T-cell (primary cell): ENCODE measurements at regions of chr5 and their contacts with region 1.

Region 1: GRCh38 chr5:66306105-66306843 is 162.2 kb downstream of the SREK1 start:
- DNase-seq: peak in 15 of 35 experiments; percentile 3 to 55 (median 7)
- ATAC-seq: peak; percentile 53 to 67 (median 58)
- H3K4me3 ChIP-seq: no peak overlapping the region
- H3K4me3 Mint-ChIP-seq: no peak overlapping the region
- H3K27ac ChIP-seq: no peak overlapping the region
- H3K27ac Mint-ChIP-seq: no peak overlapping the region
- H3K4me1 ChIP-seq: no peaks in the 10 kb centered on the region
- H3K4me1 Mint-ChIP-seq: peaks cover 5 to 6% (median 5%) of the 10 kb centered on the region in 3 donors
- H3K27me3 ChIP-seq: peaks cover 2 to 4% of the 10 kb centered on the region in 2 experiments
- H3K27me3 Mint-ChIP-seq: peaks cover 17 to 20% of the 10 kb centered on the region in 2 donors

Region 2: DNA sequence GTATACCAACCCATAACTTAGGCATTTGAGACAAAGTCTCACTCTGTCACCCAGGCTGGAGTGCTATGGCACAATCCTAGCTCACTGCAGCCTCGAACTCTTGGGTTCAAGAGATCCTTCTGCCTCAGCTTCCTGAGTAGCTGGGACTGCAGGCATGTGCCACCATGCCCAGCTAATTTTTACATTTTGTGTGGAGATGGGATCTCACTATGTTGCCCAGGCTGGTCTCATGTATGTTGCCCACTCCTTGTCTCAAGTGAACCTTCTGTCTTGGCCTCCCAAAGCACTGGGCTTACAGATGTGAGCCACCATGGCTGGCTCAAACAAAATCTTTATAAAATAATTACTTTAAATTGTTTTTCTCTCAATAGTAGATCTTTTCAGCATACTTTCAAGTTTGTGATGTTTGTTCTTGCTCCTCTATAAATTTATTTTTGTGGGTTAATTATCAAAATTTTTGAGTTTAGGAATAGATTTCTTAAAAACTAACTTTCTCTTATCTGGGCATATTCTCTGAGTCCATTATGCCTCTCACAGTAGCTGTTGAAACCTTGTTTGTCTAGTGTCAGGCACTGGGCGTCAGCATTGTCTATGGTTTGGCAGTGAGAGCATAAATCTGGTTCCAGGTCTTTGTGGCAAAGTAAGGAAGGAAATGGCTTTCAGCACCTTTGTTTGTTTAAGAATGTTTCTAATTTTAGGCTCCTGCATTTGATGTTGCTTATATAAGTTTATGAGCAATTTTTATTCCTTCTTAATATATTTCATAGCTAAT is 545.6 kb before region 1 on chr5:
- CTCF ChIA-PET with region 1: interaction called in 1 of 2 experiments, 11 read pairs
- POLR2A ChIA-PET with region 1: no interaction called
- DNase-seq: peak; percentile 29 to 82 (median 61)
- ATAC-seq: peak; percentile 95 to 100 (median 100)
- H3K4me3 ChIP-seq: no peak overlapping the region
- H3K4me3 Mint-ChIP-seq: no peak overlapping the region
- H3K27ac ChIP-seq: no peak overlapping the region
- H3K27ac Mint-ChIP-seq: no peak overlapping the region
- H3K4me1 ChIP-seq: peaks cover 0 to 9% of the 10 kb centered on the region in 2 experiments
- H3K4me1 Mint-ChIP-seq: peaks cover 3 to 6% (median 5%) of the 10 kb centered on the region in 3 donors
- H3K27me3 ChIP-seq: no peaks in the 10 kb centered on the region
- H3K27me3 Mint-ChIP-seq: no peaks in the 10 kb centered on the region

Region 3: GRCh38 chr5:66361070-66361469 is 54.8 kb after region 1 on chr5:
- CTCF ChIA-PET with region 1: no interaction called
- POLR2A ChIA-PET with region 1: no interaction called
- DNase-seq: no peak
- ATAC-seq: no peak
- H3K4me3 ChIP-seq: no peak overlapping the region
- H3K4me3 Mint-ChIP-seq: no peak overlapping the region
- H3K27ac ChIP-seq: no peak overlapping the region
- H3K27ac Mint-ChIP-seq: no peak overlapping the region
- H3K4me1 ChIP-seq: no peaks in the 10 kb centered on the region
- H3K4me1 Mint-ChIP-seq: no peaks in the 10 kb centered on the region
- H3K27me3 ChIP-seq: no peaks in the 10 kb centered on the region
- H3K27me3 Mint-ChIP-seq: peaks cover 13 to 16% of the 10 kb centered on the region in 2 donors

Region 4: GRCh38 chr5:66757188-66757833 is 451.0 kb after region 1 on chr5:
- CTCF ChIA-PET with region 1: interaction called, 5 to 12 read pairs
- POLR2A ChIA-PET with region 1: no interaction called
- DNase-seq: peak in 19 of 35 experiments; percentile 1 to 51 (median 7)
- ATAC-seq: no peak
- H3K4me3 ChIP-seq: no peak overlapping the region
- H3K4me3 Mint-ChIP-seq: no peak overlapping the region
- H3K27ac ChIP-seq: no peak overlapping the region
- H3K27ac Mint-ChIP-seq: no peak overlapping the region
- H3K4me1 ChIP-seq: no peaks in the 10 kb centered on the region
- H3K4me1 Mint-ChIP-seq: no peaks in the 10 kb centered on the region
- H3K27me3 ChIP-seq: peaks cover 0 to 2% of the 10 kb centered on the region in 2 experiments
- H3K27me3 Mint-ChIP-seq: peaks cover 10 to 19% of the 10 kb centered on the region in 2 donors